Mammary epithelial cell (primary cell): ENCODE measurements at regions of chr22 and their contacts with region 1.

Region 1: GRCh38 chr22:17158568-17159503 is at the start of gene HDHD5:
- DNase-seq: peak; percentile 89
- H3K4me3 ChIP-seq: peak within 1 kb of the TSS; percentile 46 to 91 (median 70)
- H3K27ac ChIP-seq: peak within 1 kb of the TSS; percentile 43
- H3K4me1 ChIP-seq: peaks cover 8% of the 10 kb centered on the region
- H3K27me3 ChIP-seq: no peaks in the 10 kb centered on the region
- CTCF ChIP-seq: no peak
- total RNA-seq, gene HDHD5: 27.2 to 33.0 TPM

Region 2: GRCh38 chr22:17084554-17085276 is 74.1 kb before region 1 on chr22 and contains the start of gene IL17RA:
- CTCF ChIA-PET with region 1: no interaction called
- dilution Hi-C with region 1: no loop called
- in situ Hi-C with region 1: no loop called
- intact Hi-C with region 1: loop called (anchors 1 kb)
- DNase-seq: peak; percentile 87
- H3K4me3 ChIP-seq: peak within 1 kb of the TSS; percentile 64 to 93 (median 71)
- H3K27ac ChIP-seq: peak within 1 kb of the TSS; percentile 49
- H3K4me1 ChIP-seq: peaks cover 10% of the 10 kb centered on the region
- H3K27me3 ChIP-seq: no peaks in the 10 kb centered on the region
- CTCF ChIP-seq: no peak
- total RNA-seq, gene IL17RA: 17.5 to 19.3 TPM

Region 3: GRCh38 chr22:17095538-17095937 is 63.3 kb before region 1 on chr22:
- CTCF ChIA-PET with region 1: no interaction called
- dilution Hi-C with region 1: no loop called
- in situ Hi-C with region 1: loop called in 1 of 2 experiments (anchors 10 kb)
- intact Hi-C with region 1: no loop called
- DNase-seq: no peak
- H3K4me3 ChIP-seq: no peak overlapping the region
- H3K27ac ChIP-seq: no peak overlapping the region
- H3K4me1 ChIP-seq: no peaks in the 10 kb centered on the region
- H3K27me3 ChIP-seq: no peaks in the 10 kb centered on the region
- CTCF ChIP-seq: no peak